ENCODE measurements at regions of chr3 and their contacts with region 1.

Region 1: DNA sequence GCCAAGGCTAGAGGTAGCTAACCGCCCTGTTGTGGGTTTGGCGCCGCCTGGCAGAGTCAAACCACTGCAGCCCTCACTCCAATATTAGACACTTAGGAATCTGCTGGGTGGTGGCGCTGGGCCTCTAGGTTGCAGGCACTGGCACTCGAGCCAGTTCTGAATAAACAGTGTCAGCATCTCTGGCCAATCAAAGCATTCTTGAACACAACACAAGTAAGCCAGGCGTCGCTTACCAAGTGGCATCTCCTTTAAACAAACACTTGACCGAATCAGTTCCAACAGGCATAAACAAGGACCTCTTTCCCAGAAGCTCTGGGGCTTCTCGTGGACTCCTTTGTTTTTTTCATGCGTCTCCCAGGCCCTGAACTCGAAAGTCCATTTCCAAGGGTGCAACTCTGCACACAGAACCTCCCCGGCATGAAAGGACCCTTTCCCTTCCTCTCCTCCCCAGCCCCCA is 82.3 kb downstream of the LRIG1 start:
- DNase-seq: no peak
- H3K4me3 ChIP-seq: no peak overlapping the region
- H3K4me3 Mint-ChIP-seq: no peak overlapping the region
- H3K27ac Mint-ChIP-seq: no peak overlapping the region
- H3K4me1 ChIP-seq: peaks cover 19% of the 10 kb centered on the region
- H3K4me1 Mint-ChIP-seq: peaks cover 25% of the 10 kb centered on the region
- H3K27me3 ChIP-seq: no peaks in the 10 kb centered on the region
- H3K27me3 Mint-ChIP-seq: no peaks in the 10 kb centered on the region
- CTCF ChIP-seq: no peak

Region 2: GRCh38 chr3:66464512-66464894 is 46.0 kb after region 1 on chr3:
- CTCF ChIA-PET with region 1: no interaction called
- POLR2A ChIA-PET with region 1: no interaction called
- intact Hi-C with region 1: loop called (anchors 5 kb)
- DNase-seq: no peak
- H3K4me3 ChIP-seq: no peak overlapping the region
- H3K4me3 Mint-ChIP-seq: no peak overlapping the region
- H3K27ac Mint-ChIP-seq: peak overlapping the region; percentile 19
- H3K4me1 ChIP-seq: peaks cover 34% of the 10 kb centered on the region
- H3K4me1 Mint-ChIP-seq: peaks cover 23% of the 10 kb centered on the region
- H3K27me3 ChIP-seq: no peaks in the 10 kb centered on the region
- H3K27me3 Mint-ChIP-seq: no peaks in the 10 kb centered on the region
- CTCF ChIP-seq: no peak

Region 3: GRCh38 chr3:66702126-66702525 is 283.6 kb after region 1 on chr3:
- CTCF ChIA-PET with region 1: no interaction called
- POLR2A ChIA-PET with region 1: interaction called, 13 read pairs
- intact Hi-C with region 1: no loop called
- DNase-seq: no peak
- H3K4me3 ChIP-seq: no peak overlapping the region
- H3K4me3 Mint-ChIP-seq: no peak overlapping the region
- H3K27ac Mint-ChIP-seq: no peak overlapping the region
- H3K4me1 ChIP-seq: no peaks in the 10 kb centered on the region
- H3K4me1 Mint-ChIP-seq: no peaks in the 10 kb centered on the region
- H3K27me3 ChIP-seq: no peaks in the 10 kb centered on the region
- H3K27me3 Mint-ChIP-seq: no peaks in the 10 kb centered on the region
- CTCF ChIP-seq: no peak

Measured in Caco-2 (cell line).